ENCODE measurements at regions of chr5 and their contacts with region 1.

Region 1: DNA sequence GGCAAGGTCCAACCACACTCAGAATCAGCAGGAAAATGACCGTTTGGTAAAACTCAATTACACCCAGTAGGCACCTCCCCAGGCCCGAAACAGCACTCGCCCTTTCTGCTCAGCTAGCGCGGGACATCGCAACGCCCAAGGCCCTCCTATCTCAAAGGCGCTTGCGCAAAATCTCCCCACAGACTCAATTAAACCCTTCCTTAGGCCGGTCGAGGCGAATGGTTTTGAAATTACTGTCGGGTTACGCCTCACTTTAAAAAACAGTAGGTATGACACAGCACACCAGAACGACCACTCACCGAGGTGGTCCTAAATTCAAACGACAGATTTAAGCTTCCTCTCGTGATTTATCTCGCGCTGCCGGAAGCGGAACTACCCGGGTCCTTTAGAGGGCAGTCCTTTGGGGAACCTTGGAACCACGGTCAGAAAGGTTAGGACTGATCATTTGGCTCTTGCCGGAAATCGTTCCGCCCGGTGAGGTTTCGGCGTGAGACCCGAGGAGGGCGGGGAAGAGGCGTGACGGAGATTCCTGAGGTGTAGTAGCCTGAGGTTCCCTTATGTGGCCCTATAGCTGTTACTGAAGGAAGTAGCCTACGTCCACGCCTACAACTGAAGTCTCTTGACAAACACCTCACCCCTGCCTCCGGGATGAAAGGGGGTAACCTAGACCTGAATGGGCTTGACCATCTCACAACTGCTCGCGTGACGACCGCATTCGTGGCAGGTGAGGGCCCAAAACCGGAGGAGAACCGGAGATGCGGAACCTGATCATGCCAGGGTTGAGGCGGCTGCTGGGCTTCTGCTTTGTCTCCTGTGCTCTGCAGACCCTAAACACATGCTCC is at the starts of genes GIN1 and PPIP5K2:
- DNase-seq: peak; percentile 98
- H3K4me3 Mint-ChIP-seq: peak within 1 kb of the TSS; percentile 92
- H3K27ac Mint-ChIP-seq: peak within 1 kb of the TSS; percentile 99
- H3K4me1 Mint-ChIP-seq: peaks cover 48% of the 10 kb centered on the region
- H3K27me3 Mint-ChIP-seq: no peaks in the 10 kb centered on the region
- total RNA-seq, gene GIN1: 9.6 to 10.8 TPM
- total RNA-seq, gene PPIP5K2: 53.7 to 66.6 TPM

Region 2: GRCh38 chr5:102754767-102755431 is 365.1 kb before region 1 on chr5 and contains the start of gene PAM:
- CTCF ChIA-PET with region 1: no interaction called
- POLR2A ChIA-PET with region 1: interaction called, 19 read pairs
- DNase-seq: peak; percentile 79
- H3K4me3 Mint-ChIP-seq: peak within 1 kb of the TSS; percentile 79
- H3K27ac Mint-ChIP-seq: peak within 1 kb of the TSS; percentile 77
- H3K4me1 Mint-ChIP-seq: peaks cover 34% of the 10 kb centered on the region
- H3K27me3 Mint-ChIP-seq: peaks cover 14% of the 10 kb centered on the region
- total RNA-seq, gene PAM: 45.8 to 46.2 TPM

Region 3: GRCh38 chr5:102762095-102762534 is 357.9 kb before region 1 on chr5:
- CTCF ChIA-PET with region 1: interaction called, 3 read pairs
- POLR2A ChIA-PET with region 1: interaction called, 22 read pairs
- DNase-seq: no peak
- H3K4me3 Mint-ChIP-seq: peak overlapping the region; percentile 57
- H3K27ac Mint-ChIP-seq: peak overlapping the region; percentile 54
- H3K4me1 Mint-ChIP-seq: peaks cover 67% of the 10 kb centered on the region
- H3K27me3 Mint-ChIP-seq: no peaks in the 10 kb centered on the region

Region 4: DNA sequence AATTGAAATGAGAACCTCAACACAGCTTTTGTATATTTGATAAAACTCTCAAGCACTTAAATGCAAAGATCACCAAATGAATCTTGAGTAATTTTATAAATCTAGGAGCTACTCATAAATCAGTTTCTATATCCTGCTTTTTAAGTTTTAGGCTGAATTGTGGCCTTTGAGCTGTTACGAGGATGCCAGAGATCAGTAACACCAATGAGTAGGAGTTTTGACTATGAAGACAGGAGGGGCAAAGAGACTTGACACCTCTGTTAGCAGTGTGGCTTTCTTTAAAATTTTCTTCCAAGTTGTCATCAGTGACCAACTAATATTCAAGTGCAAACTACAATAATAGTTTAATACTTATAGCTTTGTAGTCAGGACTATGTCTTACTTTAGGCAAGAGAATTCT is 12.7 kb after region 1 on chr5:
- CTCF ChIA-PET with region 1: no interaction called
- POLR2A ChIA-PET with region 1: interaction called, 14 read pairs
- DNase-seq: no peak
- H3K4me3 Mint-ChIP-seq: no peak overlapping the region
- H3K27ac Mint-ChIP-seq: no peak overlapping the region
- H3K4me1 Mint-ChIP-seq: peaks cover 7% of the 10 kb centered on the region
- H3K27me3 Mint-ChIP-seq: no peaks in the 10 kb centered on the region

Region 5: GRCh38 chr5:103258368-103258956 is 138.5 kb after region 1 on chr5 and contains the start of gene MACIR:
- CTCF ChIA-PET with region 1: interaction called, 4 read pairs
- POLR2A ChIA-PET with region 1: interaction called, 33 read pairs
- DNase-seq: peak; percentile 96
- H3K4me3 Mint-ChIP-seq: peak within 1 kb of the TSS; percentile 75
- H3K27ac Mint-ChIP-seq: peak within 1 kb of the TSS; percentile 65
- H3K4me1 Mint-ChIP-seq: peaks cover 27% of the 10 kb centered on the region
- H3K27me3 Mint-ChIP-seq: peaks cover 9% of the 10 kb centered on the region
- total RNA-seq, gene MACIR: 6.3 to 7.4 TPM